SK-N-SH (cell line): ENCODE measurements at regions of chr15 and their contacts with region 1.

Region 1: GRCh38 chr15:52735231-52736089 is 54.7 kb downstream of the ONECUT1 start:
- DNase-seq: peak; percentile 71
- H3K4me3 ChIP-seq: no peak overlapping the region; a peak in 1 of 4 replicates
- H3K27ac ChIP-seq: no peak overlapping the region
- H3K4me1 ChIP-seq: no peaks in the 10 kb centered on the region
- H3K27me3 ChIP-seq: peaks cover 4% of the 10 kb centered on the region; the same call in 1 of the 2 replicates
- CTCF ChIP-seq: peak; percentile 84
- EP300 ChIP-seq: no peak
- RAD21 ChIP-seq: peak; percentile 97

Region 2: DNA sequence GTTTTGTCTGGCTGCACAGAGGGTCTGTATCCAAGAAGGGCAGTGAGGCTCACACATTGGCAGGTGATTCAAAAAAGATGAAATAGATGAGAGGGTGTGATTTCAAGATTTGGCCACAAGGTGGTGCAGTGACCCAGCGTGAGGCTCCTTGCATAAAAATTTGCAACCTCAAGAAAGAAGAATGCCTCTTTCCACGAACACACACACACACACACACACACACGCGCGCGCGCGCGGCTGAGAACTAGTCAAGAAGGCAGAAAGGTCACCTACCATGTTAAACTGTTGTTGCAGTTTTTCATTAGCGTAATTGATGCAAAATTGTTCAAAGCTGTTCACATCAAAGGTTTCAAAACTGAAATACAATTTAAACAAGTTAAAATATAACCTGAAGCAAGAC is 479.1 kb before region 1 on chr15:
- CTCF ChIA-PET with region 1: interaction called, 86 read pairs
- POLR2A ChIA-PET with region 1: no interaction called
- DNase-seq: peak; percentile 76
- H3K4me3 ChIP-seq: no peak overlapping the region; a peak in 1 of 4 replicates
- H3K27ac ChIP-seq: no peak overlapping the region
- H3K4me1 ChIP-seq: peaks cover under 1 to 14% of the 10 kb centered on the region in 2 experiments; a peak in 3 of 4 replicates
- H3K27me3 ChIP-seq: no peaks in the 10 kb centered on the region
- CTCF ChIP-seq: peak; percentile 74
- EP300 ChIP-seq: no peak
- RAD21 ChIP-seq: peak; percentile 89

Region 3: GRCh38 chr15:52261498-52262242 is 473.8 kb before region 1 on chr15:
- CTCF ChIA-PET with region 1: interaction called, 86 read pairs
- POLR2A ChIA-PET with region 1: no interaction called
- DNase-seq: peak; percentile 81
- H3K4me3 ChIP-seq: no peak overlapping the region
- H3K27ac ChIP-seq: peak overlapping the region in 1 of 2 experiments; percentile 16; a peak in 1 of 4 replicates
- H3K4me1 ChIP-seq: peaks cover 11 to 16% of the 10 kb centered on the region in 2 experiments
- H3K27me3 ChIP-seq: no peaks in the 10 kb centered on the region
- CTCF ChIP-seq: no peak; the same call in 1 of the 2 replicates
- EP300 ChIP-seq: no peak
- RAD21 ChIP-seq: 0 out of 2 replicates have a peak, but pooled peaks have one; percentile 6

Region 4: GRCh38 chr15:52331490-52332240 is 403.8 kb before region 1 on chr15:
- CTCF ChIA-PET with region 1: interaction called, 29 read pairs
- POLR2A ChIA-PET with region 1: no interaction called
- DNase-seq: peak; percentile 48
- H3K4me3 ChIP-seq: no peak overlapping the region
- H3K27ac ChIP-seq: no peak overlapping the region
- H3K4me1 ChIP-seq: peaks cover 3 to 10% of the 10 kb centered on the region in 2 experiments; a peak in 3 of 4 replicates
- H3K27me3 ChIP-seq: no peaks in the 10 kb centered on the region
- CTCF ChIP-seq: peak; percentile 63
- EP300 ChIP-seq: no peak
- RAD21 ChIP-seq: peak; percentile 83

Region 5: GRCh38 chr15:52679232-52680040 is 56.0 kb before region 1 on chr15 and contains the start of gene ATOSA:
- CTCF ChIA-PET with region 1: interaction called, 11 read pairs
- POLR2A ChIA-PET with region 1: no interaction called
- DNase-seq: peak; percentile 95
- H3K4me3 ChIP-seq: peak within 1 kb of the TSS; percentile 70 to 76
- H3K27ac ChIP-seq: peak within 1 kb of the TSS; percentile 85 to 87
- H3K4me1 ChIP-seq: peaks cover 3 to 9% of the 10 kb centered on the region in 2 experiments; a peak in 2 of 4 replicates
- H3K27me3 ChIP-seq: no peaks in the 10 kb centered on the region
- CTCF ChIP-seq: no peak
- EP300 ChIP-seq: peak in 1 of 2 experiments; percentile 60; a peak in 1 of 4 replicates
- RAD21 ChIP-seq: no peak
- polyA plus RNA-seq, gene ATOSA: 7.4 and 10.9 TPM in 2 replicates

Region 6: GRCh38 chr15:52709190-52709981 is 26.1 kb before region 1 on chr15:
- CTCF ChIA-PET with region 1: interaction called, 10 read pairs
- POLR2A ChIA-PET with region 1: no interaction called
- DNase-seq: no peak
- H3K4me3 ChIP-seq: no peak overlapping the region
- H3K27ac ChIP-seq: no peak overlapping the region
- H3K4me1 ChIP-seq: no peaks in the 10 kb centered on the region
- H3K27me3 ChIP-seq: peaks cover 6% of the 10 kb centered on the region; the same call in 1 of the 2 replicates
- CTCF ChIP-seq: no peak
- EP300 ChIP-seq: no peak
- RAD21 ChIP-seq: no peak